Sigmoid colon (tissue), 7 donors: ENCODE measurements at regions of chr10 and their contacts with region 1.

Region 1: DNA sequence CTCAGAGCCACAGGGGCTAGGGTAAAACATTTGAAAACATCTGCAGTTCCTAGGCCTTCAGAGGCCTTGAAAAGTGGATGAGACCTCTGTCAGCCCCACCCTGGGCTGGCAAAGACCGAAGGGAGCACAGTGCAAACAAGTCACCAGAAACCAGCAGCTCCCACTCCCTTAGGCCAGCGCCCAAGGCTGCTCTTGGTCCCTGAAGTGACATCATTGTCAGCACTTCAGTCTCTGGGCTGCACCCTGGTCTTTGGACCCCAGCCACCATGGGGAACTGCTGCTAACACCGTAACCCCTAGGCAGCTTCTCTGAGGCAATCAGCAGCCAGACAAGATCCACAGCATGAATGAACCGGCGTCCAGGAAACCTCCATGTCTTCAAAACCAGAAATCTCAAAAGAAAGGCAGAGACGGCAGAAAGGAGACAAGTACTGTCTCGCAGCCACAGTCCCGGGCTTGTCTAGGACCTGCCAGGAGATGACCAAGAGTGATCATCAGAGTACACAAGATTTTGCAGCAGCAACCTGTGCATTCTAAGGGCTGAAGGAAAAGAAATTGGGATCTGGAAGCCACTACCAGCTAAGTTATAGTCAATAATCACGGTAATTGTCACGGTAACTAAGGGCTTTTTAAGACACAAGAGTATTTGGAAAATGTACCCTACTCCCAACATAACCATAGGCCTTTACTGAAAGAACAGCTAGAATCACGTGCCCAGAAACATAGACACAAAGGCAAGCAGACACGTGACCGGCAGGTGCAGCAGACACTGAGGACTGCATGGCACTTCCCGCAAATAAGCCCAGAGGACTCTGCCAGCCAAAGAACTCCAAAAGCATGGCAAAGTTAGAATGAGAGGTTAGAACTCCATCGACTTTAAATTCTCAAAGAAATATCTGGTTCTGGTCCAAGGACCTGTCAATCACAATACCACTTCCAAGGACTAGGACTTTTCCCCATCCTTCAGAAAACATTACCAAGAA is 23.3 kb downstream of the CPXM2 start:
- DNase-seq: no peak
- H3K4me3 ChIP-seq: no peak overlapping the region
- H3K27ac ChIP-seq: peak overlapping the region; percentile 91 to 97 (median 97)
- H3K4me1 ChIP-seq: peaks cover 0 to 78% (median 71%) of the 10 kb centered on the region in 4 donors
- H3K27me3 ChIP-seq: no peaks in the 10 kb centered on the region
- CTCF ChIP-seq: no peak
- EP300 ChIP-seq: no peak
- POLR2A ChIP-seq: no peak

Region 2: GRCh38 chr10:123651421-123652047 is 216.8 kb before region 1 on chr10:
- intact Hi-C with region 1: no loop called
- DNase-seq: no peak
- H3K4me3 ChIP-seq: no peak overlapping the region
- H3K27ac ChIP-seq: no peak overlapping the region
- H3K4me1 ChIP-seq: no peaks in the 10 kb centered on the region
- H3K27me3 ChIP-seq: no peaks in the 10 kb centered on the region
- CTCF ChIP-seq: no peak
- EP300 ChIP-seq: no peak
- POLR2A ChIP-seq: no peak

Region 3: DNA sequence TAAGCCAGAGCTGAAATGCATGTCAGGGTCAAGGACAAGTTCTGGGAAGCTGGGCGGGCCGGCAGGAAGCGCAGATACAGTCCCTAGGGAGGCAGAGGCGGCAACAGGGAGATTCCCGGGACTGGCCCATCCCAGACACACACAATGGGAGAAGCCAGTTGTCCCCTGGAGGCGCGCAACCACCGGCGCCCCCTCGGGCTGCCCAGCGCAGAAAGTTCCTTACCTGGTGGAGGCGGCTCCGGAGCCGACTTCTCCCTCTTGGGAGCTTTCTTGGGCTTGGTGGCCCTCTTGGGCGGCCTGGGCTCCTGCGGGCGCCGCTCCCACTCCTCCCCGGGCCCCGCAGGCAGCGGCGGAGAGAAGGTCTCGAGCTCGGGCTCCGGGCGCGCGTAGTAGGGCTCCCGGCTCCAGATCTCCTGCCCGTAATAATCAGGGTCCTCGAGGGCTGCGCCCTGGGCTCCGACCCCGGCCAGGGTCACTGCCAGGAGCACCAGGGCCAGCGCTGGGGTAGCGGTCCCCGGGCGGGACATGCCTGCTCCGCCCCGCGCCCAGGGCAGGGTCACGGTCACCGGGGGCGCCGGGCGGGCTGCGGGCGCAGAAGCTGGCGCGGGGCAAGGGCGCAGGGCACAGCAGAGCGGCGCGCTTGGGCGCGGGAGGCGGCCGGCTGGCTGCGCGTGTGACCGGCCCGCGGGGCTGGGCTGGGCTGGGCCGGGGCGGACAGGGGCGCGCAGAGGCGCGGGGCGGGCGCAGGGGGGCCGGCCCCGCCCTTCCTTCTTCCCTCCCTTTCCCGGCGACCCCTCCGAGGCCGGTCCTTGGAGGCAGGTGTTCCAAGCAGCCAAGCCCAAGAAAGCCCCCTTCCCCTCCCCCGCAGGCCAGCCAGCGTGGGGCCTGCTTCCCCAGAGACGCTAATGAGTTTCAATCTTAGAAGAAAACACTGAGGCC is 23.1 kb after region 1 on chr10 and contains the start of gene CPXM2:
- intact Hi-C with region 1: loop called (anchors 1 kb)
- DNase-seq: no peak
- H3K4me3 ChIP-seq: peak within 1 kb of the TSS; percentile 64 to 87 (median 84)
- H3K27ac ChIP-seq: peak within 1 kb of the TSS; percentile 96 to 99 (median 98)
- H3K4me1 ChIP-seq: peaks cover 2 to 72% (median 56%) of the 10 kb centered on the region in 4 donors
- H3K27me3 ChIP-seq: peaks cover 0 to 6% (median 0%) of the 10 kb centered on the region in 3 donors
- CTCF ChIP-seq: no peak
- EP300 ChIP-seq: no peak
- POLR2A ChIP-seq: peak in 1 of 2 donors; percentile 24
- total RNA-seq, gene CPXM2: 48.5 to 153 (median 106) TPM

Region 4: GRCh38 chr10:123958241-123958640 is 89.9 kb after region 1 on chr10:
- intact Hi-C with region 1: loop called (anchors 2 kb)
- DNase-seq: no peak
- H3K4me3 ChIP-seq: no peak overlapping the region
- H3K27ac ChIP-seq: peak overlapping the region; percentile 50 to 85 (median 76)
- H3K4me1 ChIP-seq: peaks cover 0 to 31% (median 25%) of the 10 kb centered on the region in 4 donors
- H3K27me3 ChIP-seq: no peaks in the 10 kb centered on the region
- CTCF ChIP-seq: no peak
- EP300 ChIP-seq: peak in 3 of 4 donors; percentile 31 to 40 (median 38)
- POLR2A ChIP-seq: no peak